Mammary epithelial cell (primary cell): ENCODE measurements at regions of chr16 and their contacts with region 1.

Region 1: DNA sequence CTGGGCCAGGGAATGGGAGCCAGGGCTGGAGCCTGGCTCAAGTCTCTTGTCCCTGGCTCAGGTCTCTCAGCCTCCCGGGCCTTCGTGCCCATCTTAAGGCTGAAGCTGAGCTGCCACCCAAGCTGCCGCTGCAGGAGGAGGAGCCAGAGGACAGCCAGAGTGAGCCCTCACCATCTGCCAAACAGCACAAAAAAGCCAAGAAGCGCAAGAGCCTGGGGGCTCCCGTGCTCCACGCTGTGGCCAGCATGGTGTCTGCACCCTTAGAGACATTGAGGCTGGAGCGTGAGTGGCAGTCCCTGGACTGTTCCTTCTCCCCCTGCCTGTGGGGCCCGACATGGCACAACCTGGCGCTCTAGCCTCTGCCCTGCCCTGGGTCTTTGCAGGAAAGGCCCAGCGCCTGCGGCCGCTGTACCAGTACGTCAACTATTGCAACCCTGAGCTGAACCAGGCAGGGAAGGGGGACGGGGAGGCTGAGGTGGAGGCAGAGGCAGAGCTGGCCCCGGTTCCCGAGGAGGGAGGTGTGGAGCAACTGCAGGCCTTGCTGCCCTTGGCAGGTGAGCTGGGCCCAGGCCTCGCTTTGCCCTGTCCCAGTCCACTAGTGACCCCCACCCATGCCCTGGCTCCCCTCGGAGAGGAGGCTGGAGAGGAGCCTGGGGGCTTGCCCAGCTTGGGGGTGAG is 1.3 kb downstream of the C16orf86 start:
- DNase-seq: peak; percentile 81
- H3K4me3 ChIP-seq: no peak overlapping the region
- H3K27ac ChIP-seq: no peak overlapping the region
- H3K4me1 ChIP-seq: peaks cover 19% of the 10 kb centered on the region
- H3K27me3 ChIP-seq: no peaks in the 10 kb centered on the region
- CTCF ChIP-seq: peak; percentile 94 to 95

Region 2: DNA sequence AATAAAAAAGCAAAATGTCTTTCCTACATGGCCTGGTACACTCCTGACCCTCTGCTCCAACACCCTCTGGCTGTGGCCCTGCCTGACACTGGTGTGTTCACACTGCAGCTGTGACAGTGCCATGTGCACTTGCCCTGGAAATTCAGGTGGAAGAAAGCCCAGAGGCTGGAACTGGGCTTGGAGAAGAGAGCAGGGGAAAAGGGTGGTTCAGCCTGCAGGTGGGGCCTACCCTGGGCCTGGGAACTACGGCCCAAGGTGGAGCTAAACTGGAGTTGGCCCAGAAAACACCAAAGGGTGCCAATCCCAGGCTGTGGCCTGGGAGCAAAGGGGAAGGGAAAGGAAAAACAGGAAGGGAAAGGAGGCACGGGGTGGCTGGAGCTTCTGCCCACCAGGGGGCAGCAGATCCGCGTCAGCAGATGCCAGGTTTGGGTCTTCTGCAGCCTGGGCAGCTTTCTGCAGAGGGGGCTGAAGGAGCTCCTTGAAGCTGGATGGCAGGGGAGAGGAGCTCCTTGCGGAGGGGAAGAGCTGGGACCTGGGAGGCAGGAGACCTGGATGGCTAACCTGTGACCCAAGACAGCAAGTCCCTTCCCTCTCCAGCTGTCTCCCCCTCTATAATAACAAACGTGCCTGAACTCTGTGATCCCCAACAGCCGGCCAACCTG is 121.1 kb before region 1 on chr16:
- CTCF ChIA-PET with region 1: no interaction called
- dilution Hi-C with region 1: no loop called
- in situ Hi-C with region 1: loop called in 1 of 2 experiments (anchors 25 kb)
- intact Hi-C with region 1: loop called (anchors 1 kb)
- DNase-seq: peak; percentile 45
- H3K4me3 ChIP-seq: no peak overlapping the region
- H3K27ac ChIP-seq: no peak overlapping the region
- H3K4me1 ChIP-seq: peaks cover 26% of the 10 kb centered on the region
- H3K27me3 ChIP-seq: no peaks in the 10 kb centered on the region
- CTCF ChIP-seq: peak; percentile 93 to 94

Region 3: GRCh38 chr16:67598527-67598926 is 69.4 kb before region 1 on chr16:
- CTCF ChIA-PET with region 1: no interaction called
- dilution Hi-C with region 1: no loop called
- in situ Hi-C with region 1: no loop called
- intact Hi-C with region 1: no loop called
- DNase-seq: no peak
- H3K4me3 ChIP-seq: no peak overlapping the region
- H3K27ac ChIP-seq: no peak overlapping the region
- H3K4me1 ChIP-seq: peaks cover 16% of the 10 kb centered on the region
- H3K27me3 ChIP-seq: no peaks in the 10 kb centered on the region
- CTCF ChIP-seq: no peak

Region 4: GRCh38 chr16:67683767-67684385 is 15.9 kb after region 1 on chr16:
- CTCF ChIA-PET with region 1: no interaction called
- dilution Hi-C with region 1: no loop called
- in situ Hi-C with region 1: no loop called
- intact Hi-C with region 1: no loop called
- DNase-seq: no peak
- H3K4me3 ChIP-seq: no peak overlapping the region
- H3K27ac ChIP-seq: no peak overlapping the region
- H3K4me1 ChIP-seq: no peaks in the 10 kb centered on the region
- H3K27me3 ChIP-seq: no peaks in the 10 kb centered on the region
- CTCF ChIP-seq: no peak